Posterior cingulate gyrus (tissue), 11 donors: ENCODE measurements at regions of chr12 and their contacts with region 1.

Region 1: GRCh38 chr12:42237052-42237852 is 796 bp downstream of the YAF2 start:
- DNase-seq: peak; percentile 40 to 92 (median 59)

Region 2: DNA sequence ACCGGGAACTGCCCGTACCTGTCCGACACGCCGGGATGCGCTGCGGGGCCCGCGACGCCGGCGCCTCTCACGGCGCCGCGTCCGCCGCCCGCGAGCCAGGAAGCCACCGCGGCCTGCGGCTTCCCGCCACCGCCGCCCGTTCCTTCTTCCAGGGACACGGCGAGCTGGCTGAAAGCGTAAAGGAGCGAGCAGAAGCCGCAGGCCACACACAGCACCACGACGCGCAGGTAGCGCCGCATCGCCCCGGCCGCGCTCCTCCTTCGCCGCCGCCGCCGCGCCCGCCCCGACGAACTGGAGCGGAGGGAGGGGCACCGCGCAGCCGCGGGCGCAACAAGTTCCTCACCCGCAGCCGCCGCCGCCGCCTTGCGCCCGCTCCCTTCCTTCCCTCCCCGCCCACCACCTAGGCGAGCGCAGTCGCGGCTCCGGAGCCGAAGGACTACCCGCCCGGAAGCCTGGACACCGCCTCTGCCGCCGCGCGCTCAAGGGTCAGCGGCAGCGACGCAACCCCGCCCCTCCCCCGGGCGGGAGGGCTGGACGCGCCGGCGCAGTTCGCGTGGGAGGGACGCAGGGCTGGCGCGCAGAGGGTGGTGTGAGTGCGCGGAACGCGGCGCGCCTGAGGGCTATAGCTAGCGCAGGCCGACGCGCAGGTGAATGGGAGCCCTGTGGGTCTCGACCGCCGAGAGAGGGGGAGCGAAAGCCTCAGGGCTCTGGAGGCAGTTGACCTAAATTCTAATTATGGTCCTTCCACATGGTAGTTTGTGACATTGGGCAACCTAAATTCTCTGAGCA is 92.7 kb before region 1 on chr12 and contains the start of gene GXYLT1:
- intact Hi-C with region 1: loop called (anchors 1 kb)
- DNase-seq: peak; percentile 74 to 98 (median 88)

Region 3: GRCh38 chr12:42325653-42326474 is 88.6 kb after region 1 on chr12 and contains the starts of genes PPHLN1 and ZCRB1:
- intact Hi-C with region 1: loop called (anchors 5 kb)
- DNase-seq: peak; percentile 74 to 97 (median 83)